ENCODE measurements at regions of chr1 and their contacts with region 1.

Region 1: DNA sequence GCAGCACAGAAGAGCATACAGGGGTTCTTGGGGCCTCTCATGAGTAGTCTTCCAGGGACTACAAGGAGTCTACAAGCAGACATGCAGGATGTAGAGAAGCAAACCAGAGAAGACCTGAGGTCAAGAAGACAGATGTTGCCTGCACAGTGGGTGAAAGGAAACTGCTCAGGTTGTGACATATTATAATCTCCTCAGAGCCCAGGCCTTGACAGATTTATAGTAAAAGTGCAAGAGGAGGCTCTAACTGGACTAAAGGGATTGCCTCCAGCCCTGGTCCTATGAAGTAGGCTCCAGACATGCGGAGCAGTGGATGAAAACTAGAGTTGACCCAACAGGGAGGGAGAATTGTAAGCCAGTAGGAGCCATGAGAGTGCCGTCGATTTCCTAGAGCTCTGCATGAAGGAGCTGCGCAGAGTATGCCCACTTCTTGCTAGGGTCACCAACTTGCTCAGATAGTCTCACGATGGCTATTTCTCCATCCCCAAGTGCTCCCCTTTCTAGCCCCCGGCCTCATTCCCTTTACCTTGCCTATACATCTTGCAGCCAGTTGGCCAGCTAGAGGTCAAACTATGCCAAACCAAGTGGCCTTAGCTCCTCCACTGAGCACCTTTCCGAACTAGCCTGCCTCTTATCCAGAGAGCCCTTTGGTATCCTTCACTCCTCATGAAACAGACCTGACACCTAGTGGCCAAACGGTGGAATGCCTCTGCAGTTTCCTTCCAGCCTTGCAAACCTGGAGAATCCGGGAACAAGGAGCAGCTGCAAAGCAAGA is 36.2 kb upstream of the IPO9 start:
- DNase-seq: peak; percentile 16
- H3K4me3 Mint-ChIP-seq: no peak overlapping the region
- H3K27ac Mint-ChIP-seq: no peak overlapping the region
- H3K4me1 Mint-ChIP-seq: peaks cover 15% of the 10 kb centered on the region
- H3K27me3 Mint-ChIP-seq: peaks cover 4% of the 10 kb centered on the region

Region 2: GRCh38 chr1:201559679-201560162 is 233.0 kb before region 1 on chr1:
- intact Hi-C with region 1: loop called (anchors 1 kb)
- DNase-seq: peak; percentile 41
- H3K4me3 Mint-ChIP-seq: no peak overlapping the region
- H3K27ac Mint-ChIP-seq: no peak overlapping the region
- H3K4me1 Mint-ChIP-seq: peaks cover 6% of the 10 kb centered on the region
- H3K27me3 Mint-ChIP-seq: peaks cover 5% of the 10 kb centered on the region

Region 3: DNA sequence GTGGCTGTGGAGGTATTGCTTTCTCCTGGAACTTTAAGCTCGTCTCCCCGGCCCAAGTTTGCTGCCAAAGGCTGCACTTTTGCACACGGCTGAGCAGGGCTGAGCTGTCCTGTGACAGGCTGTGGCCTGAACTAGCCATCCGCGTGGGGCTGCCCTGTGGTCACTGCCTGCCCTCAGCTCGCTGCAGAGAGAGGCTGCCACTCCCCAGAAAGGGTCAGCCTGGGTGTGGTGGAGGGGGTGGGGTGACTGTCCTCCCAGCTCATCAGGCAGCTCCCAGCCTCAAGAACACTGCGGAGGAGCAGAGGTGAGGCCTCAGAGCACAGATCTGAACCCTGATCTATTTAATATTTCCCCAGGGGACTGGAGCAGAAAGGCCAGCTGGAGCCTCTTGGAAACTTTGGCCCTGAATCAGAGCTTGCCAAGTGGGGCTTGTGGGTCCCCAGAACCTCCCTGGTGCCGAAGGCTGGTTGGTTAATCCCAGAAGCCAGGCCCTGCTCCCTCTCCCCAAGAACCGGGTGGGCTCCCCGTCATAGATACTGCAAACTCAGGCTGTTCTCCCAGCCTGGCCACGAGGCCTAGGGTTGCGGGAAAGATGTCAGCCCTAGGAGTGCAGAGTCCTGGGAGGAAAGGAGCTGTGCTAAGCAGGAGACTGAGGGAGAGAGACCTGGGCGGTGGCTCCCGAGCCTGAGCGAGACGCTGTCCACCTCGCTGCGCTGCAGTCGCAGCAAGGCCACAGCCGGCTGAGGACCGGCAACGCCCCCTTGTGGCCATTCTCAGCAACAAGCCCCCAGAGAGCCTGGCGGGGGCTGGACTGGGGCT is 88.9 kb before region 1 on chr1:
- intact Hi-C with region 1: loop called (anchors 1 kb)
- DNase-seq: peak; percentile 40
- H3K4me3 Mint-ChIP-seq: no peak overlapping the region
- H3K27ac Mint-ChIP-seq: no peak overlapping the region
- H3K4me1 Mint-ChIP-seq: no peaks in the 10 kb centered on the region
- H3K27me3 Mint-ChIP-seq: peaks cover 13% of the 10 kb centered on the region

Region 4: GRCh38 chr1:201709564-201710295 is 83.0 kb before region 1 on chr1:
- intact Hi-C with region 1: loop called (anchors 1 kb)
- DNase-seq: peak; percentile 30
- H3K4me3 Mint-ChIP-seq: no peak overlapping the region
- H3K27ac Mint-ChIP-seq: no peak overlapping the region
- H3K4me1 Mint-ChIP-seq: no peaks in the 10 kb centered on the region
- H3K27me3 Mint-ChIP-seq: peaks cover 5% of the 10 kb centered on the region